Heart right ventricle (tissue), 16 donors: ENCODE measurements at regions of chr16 and their contacts with region 1.

Region 1: DNA sequence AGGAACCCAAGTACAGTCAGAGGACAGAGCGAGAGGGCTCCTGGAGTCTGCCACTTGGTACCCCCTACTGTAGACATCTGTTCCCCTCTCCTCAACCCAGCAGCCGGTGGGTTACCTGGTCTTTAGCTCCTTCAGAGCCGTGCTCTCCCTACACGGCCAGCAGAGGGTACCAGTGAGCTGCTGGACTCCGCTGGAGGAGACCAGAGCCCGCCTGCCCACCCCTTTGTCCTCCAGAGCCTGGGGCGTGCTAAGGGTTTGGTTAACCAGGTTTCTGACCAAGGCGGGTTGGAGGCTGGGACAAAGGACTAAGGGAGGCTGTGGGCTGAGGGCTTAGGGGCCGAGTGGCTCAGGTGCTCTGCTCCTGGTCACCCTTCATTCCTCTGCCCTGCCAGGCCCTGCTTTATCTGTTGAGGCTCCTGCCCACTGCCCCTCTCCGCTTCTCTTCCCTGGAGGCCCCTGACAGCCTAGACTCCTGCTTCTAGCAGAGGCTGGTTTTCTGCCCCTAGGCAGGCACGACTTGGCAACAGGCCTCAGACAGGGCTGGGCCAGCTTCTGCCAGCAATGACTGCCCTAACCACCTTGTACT is 2.7 kb upstream of the HSD11B2 start:
- DNase-seq: peak; percentile 71 to 75
- ATAC-seq: peak; percentile 71 to 89 (median 80)
- H3K4me3 ChIP-seq: no peak overlapping the region
- H3K27ac ChIP-seq: peak overlapping the region in 1 of 10 donors; percentile 34
- H3K4me1 ChIP-seq: peaks cover 8 to 42% (median 32%) of the 10 kb centered on the region in 9 donors
- H3K27me3 ChIP-seq: peaks cover 0 to 83% (median 32%) of the 10 kb centered on the region in 7 donors
- CTCF ChIP-seq: peak; percentile 62 to 91 (median 88)

Region 2: DNA sequence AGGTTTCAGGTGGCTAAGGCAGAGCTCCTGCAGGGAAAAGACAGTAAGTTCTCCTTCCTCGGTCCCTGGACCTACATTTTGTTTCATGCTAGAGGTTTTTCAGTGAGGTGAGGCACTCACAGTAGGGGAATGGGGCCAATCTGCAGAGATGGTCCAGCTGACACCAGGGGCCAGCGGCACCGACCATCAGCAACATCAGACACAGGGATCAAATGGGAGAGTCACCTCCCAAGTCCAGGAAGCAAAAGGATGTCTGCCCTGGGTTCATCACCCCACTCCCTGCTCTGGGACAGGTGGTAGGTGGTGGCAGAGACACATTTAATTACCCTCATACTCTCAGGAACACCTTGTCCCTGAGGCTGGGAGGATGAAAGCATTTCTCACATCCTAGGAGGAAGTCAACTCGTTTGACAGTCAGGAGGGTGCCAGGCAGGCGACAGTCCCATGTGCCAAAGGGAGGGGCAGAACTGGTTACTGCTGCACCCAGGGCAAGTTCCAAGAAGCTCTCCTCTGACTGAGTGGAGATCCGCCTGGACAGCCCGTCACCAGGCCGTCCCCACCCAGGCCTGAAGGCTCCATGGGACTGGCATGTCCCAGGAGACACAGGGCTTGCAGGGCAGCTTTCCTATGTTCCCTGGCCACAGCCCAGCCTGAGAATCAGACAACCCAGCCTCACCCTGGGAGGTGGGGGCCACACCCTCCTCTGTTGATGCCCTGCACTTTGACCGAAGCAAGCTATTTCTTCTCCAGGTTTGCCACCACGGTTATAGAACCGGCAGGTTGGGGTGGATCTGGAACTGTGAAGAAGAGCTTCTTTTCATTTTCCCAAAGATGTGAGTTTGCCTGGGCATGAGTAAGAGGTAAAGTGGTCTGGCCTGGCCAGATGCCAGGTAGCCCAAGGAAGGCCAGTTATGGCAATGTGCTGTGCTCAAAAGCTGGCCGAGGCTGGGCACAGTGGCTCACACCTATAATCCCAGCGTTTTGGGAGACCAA is 33.7 kb after region 1 on chr16:
- intact Hi-C with region 1: loop called (anchors 1 to 5 kb)
- DNase-seq: no peak
- ATAC-seq: no peak
- H3K4me3 ChIP-seq: no peak overlapping the region
- H3K27ac ChIP-seq: no peak overlapping the region
- H3K4me1 ChIP-seq: peaks cover 48 to 90% (median 83%) of the 10 kb centered on the region in 9 donors
- H3K27me3 ChIP-seq: no peaks in the 10 kb centered on the region
- CTCF ChIP-seq: no peak

Region 3: GRCh38 chr16:67470359-67470758 is 42.1 kb after region 1 on chr16:
- intact Hi-C with region 1: loop called in 8 of 10 experiments (anchors 1 to 5 kb)
- DNase-seq: peak; percentile 89 to 90
- ATAC-seq: peak; percentile 81 to 95 (median 90)
- H3K4me3 ChIP-seq: no peak overlapping the region
- H3K27ac ChIP-seq: peak overlapping the region in 3 of 10 donors; percentile 17 to 43 (median 32)
- H3K4me1 ChIP-seq: peaks cover 13 to 68% (median 35%) of the 10 kb centered on the region in 9 donors
- H3K27me3 ChIP-seq: no peaks in the 10 kb centered on the region
- CTCF ChIP-seq: no peak